ENCODE measurements at regions of chr1 and their contacts with region 1.

Region 1: GRCh38 chr1:27097484-27097917 is 57.4 kb downstream of the SLC9A1 start:
- DNase-seq: peak; percentile 76 to 83 (median 78)
- ATAC-seq: peak; percentile 50 to 63 (median 58)
- H3K4me3 ChIP-seq: no peak overlapping the region
- H3K27ac ChIP-seq: peak overlapping the region in 6 of 12 donors; percentile 23 to 91 (median 84)
- H3K4me1 ChIP-seq: peaks cover 3 to 40% (median 28%) of the 10 kb centered on the region in 12 donors
- H3K27me3 ChIP-seq: no peaks in the 10 kb centered on the region
- CTCF ChIP-seq: peak; percentile 94 to 99 (median 98)
- POLR2A ChIP-seq: no peak

Region 2: DNA sequence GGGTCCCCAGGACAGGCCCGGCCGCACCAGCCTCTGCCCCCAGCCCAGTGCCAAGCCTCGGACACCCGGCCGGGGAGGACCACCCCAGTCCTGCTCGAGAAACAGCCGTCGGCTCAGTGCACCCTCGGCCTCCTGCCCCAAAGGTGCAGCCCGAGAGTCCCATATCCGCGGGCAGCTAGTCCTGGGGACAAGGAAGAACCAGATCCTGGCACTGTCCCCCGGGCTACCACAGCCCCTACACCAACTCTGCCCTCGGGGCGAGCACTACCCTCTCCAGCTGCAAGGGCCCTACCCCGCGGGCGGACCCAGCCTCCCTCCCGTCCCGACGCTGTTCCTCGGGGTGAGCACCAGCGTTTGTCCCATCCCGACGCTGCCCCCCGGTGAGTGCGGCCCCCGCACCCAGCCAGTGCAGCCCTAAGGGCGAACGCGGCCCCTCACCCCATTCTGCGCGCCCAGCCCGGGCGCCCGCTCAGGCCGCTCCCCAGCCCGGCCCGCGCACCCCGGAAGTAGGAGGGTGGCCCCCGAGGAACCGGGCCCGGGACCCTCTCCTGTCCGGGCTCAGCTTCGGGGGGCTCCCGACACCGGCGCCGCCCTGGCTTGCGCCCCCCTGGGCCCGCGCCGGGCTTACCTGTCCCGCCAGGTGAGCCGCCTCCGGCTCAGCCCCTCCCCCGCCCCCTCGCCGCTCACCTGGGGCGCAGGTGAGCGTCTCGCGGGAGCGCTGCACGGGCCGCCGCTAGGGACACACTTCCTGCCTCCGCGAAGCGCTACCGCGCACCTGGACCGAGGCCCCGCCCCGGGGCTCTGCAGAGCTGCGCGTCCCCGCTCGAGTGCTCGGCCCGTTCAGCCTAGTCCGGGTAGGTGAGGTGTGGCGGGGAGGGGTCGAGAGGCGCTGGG is 137.5 kb before region 1 on chr1 and contains the start of gene KDF1:
- intact Hi-C with region 1: loop called in 2 of 10 experiments (anchors 5 to 10 kb)
- DNase-seq: peak in 1 of 5 donors; percentile 24
- ATAC-seq: peak in 2 of 4 donors; percentile 44 to 58
- H3K4me3 ChIP-seq: peak within 1 kb of the TSS; percentile 20 to 62 (median 41)
- H3K27ac ChIP-seq: no peak within 1 kb of the TSS
- H3K4me1 ChIP-seq: peaks cover 0 to 20% (median 6%) of the 10 kb centered on the region in 12 donors
- H3K27me3 ChIP-seq: peaks cover 9 to 63% (median 28%) of the 10 kb centered on the region in 9 donors
- CTCF ChIP-seq: no peak
- POLR2A ChIP-seq: no peak
- total RNA-seq, gene KDF1: 0.12 to 0.45 TPM in 2 of 9 donors, not detected in the others

Region 3: GRCh38 chr1:26965213-26965612 is 132.3 kb before region 1 on chr1:
- intact Hi-C with region 1: loop called in 2 of 10 experiments (anchors 5 to 10 kb)
- DNase-seq: peak in 1 of 5 donors; percentile 2
- ATAC-seq: no peak
- H3K4me3 ChIP-seq: no peak overlapping the region
- H3K27ac ChIP-seq: no peak overlapping the region
- H3K4me1 ChIP-seq: peaks cover 0 to 11% (median under 1%) of the 10 kb centered on the region in 12 donors
- H3K27me3 ChIP-seq: peaks cover under 1 to 37% (median 7%) of the 10 kb centered on the region in 9 donors
- CTCF ChIP-seq: no peak
- POLR2A ChIP-seq: no peak

Region 4: GRCh38 chr1:26993237-26994019 is 104.1 kb before region 1 on chr1 and contains the start of gene TRNP1:
- intact Hi-C with region 1: loop called (anchors 1 to 5 kb)
- DNase-seq: peak; percentile 60 to 86 (median 74)
- ATAC-seq: peak; percentile 53 to 75 (median 70)
- H3K4me3 ChIP-seq: peak within 1 kb of the TSS; percentile 62 to 92 (median 68)
- H3K27ac ChIP-seq: peak within 1 kb of the TSS in 10 of 12 donors; percentile 46 to 79 (median 61)
- H3K4me1 ChIP-seq: peaks cover 6 to 44% (median 25%) of the 10 kb centered on the region in 12 donors
- H3K27me3 ChIP-seq: peaks cover 0 to 41% (median 13%) of the 10 kb centered on the region in 9 donors
- CTCF ChIP-seq: no peak
- POLR2A ChIP-seq: peak in 1 of 2 donors; percentile 50
- total RNA-seq, gene TRNP1: 16.6 to 68.5 (median 21.7) TPM

Region 5: GRCh38 chr1:26999440-26999987 is 98.0 kb before region 1 on chr1:
- intact Hi-C with region 1: loop called (anchors 1 to 5 kb)
- DNase-seq: peak; percentile 73 to 87 (median 79)
- ATAC-seq: peak; percentile 75 to 86 (median 84)
- H3K4me3 ChIP-seq: no peak overlapping the region
- H3K27ac ChIP-seq: peak overlapping the region; percentile 58 to 91 (median 80)
- H3K4me1 ChIP-seq: peaks cover 13 to 75% (median 52%) of the 10 kb centered on the region in 12 donors
- H3K27me3 ChIP-seq: peaks cover 0 to 23% (median 0%) of the 10 kb centered on the region in 9 donors
- CTCF ChIP-seq: no peak
- POLR2A ChIP-seq: no peak